ENCODE measurements at regions of chr3 and their contacts with region 1.

Region 1: DNA sequence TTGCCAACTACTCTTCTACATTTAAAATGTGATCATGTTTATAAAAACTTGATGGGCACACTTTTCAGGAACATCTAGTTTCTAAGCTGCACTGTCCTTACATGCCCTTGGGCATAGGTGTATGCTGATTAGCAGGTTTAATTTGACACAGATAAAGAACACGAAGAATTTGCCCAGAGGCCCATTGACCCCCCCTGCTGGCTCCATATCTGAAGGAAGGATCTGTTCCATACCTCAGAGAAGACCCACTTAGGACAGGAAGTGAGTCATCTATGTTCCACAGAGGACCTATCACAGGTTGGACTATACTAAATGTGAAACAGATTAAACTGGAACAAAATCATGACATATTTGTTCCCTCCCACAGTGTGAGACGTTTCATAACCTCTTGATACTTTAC is 92.8 kb upstream of the LPP start:
- DNase-seq: peak in 6 of 9 donors; percentile 4 to 60 (median 11)
- ATAC-seq: peak; percentile 86
- H3K4me3 ChIP-seq: no peak overlapping the region
- H3K4me3 Mint-ChIP-seq: peak overlapping the region in 1 of 10 donors; percentile 62
- H3K27ac ChIP-seq: no peak overlapping the region
- H3K27ac Mint-ChIP-seq: peak overlapping the region in 4 of 9 donors; percentile 19 to 74 (median 31)
- H3K4me1 ChIP-seq: peaks cover 3 to 8% of the 10 kb centered on the region in 2 donors
- H3K4me1 Mint-ChIP-seq: peaks cover 0 to 25% (median 13%) of the 10 kb centered on the region in 7 donors
- H3K27me3 ChIP-seq: no peaks in the 10 kb centered on the region
- H3K27me3 Mint-ChIP-seq: no peaks in the 10 kb centered on the region

Region 2: GRCh38 chr3:188000361-188000861 is 60.7 kb before region 1 on chr3:
- CTCF ChIA-PET with region 1: no interaction called
- POLR2A ChIA-PET with region 1: no interaction called
- intact Hi-C with region 1: loop called in 1 of 2 experiments (anchors 2 kb)
- DNase-seq: no peak
- ATAC-seq: no peak
- H3K4me3 ChIP-seq: peak overlapping the region; percentile 13
- H3K4me3 Mint-ChIP-seq: peak overlapping the region; percentile 42 to 83 (median 77)
- H3K27ac ChIP-seq: no peak overlapping the region
- H3K27ac Mint-ChIP-seq: peak overlapping the region; percentile 27 to 94 (median 85)
- H3K4me1 ChIP-seq: peaks cover 26 to 37% of the 10 kb centered on the region in 2 donors
- H3K4me1 Mint-ChIP-seq: peaks cover 41 to 75% (median 64%) of the 10 kb centered on the region in 7 donors
- H3K27me3 ChIP-seq: no peaks in the 10 kb centered on the region
- H3K27me3 Mint-ChIP-seq: no peaks in the 10 kb centered on the region

Region 3: DNA sequence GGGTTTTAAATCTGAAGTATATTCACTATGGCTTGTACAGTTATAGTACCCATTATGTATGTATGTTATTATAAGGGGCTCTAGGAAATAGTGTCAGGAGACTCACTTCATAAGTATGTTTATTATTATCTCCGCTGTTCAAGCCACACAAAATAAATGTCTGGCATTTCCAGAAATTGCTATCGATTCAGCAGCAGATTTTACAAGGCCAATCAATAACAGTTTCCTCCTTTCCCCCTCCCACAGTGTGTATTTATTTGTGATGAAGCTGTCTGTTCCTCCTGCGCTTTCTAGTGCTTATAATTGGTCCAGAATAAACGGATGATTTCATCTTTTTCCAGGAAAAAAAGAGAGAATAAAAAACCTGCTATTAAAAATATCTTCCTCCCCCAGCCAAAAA is 41.4 kb before region 1 on chr3:
- CTCF ChIA-PET with region 1: no interaction called
- POLR2A ChIA-PET with region 1: no interaction called
- intact Hi-C with region 1: no loop called
- DNase-seq: no peak
- ATAC-seq: no peak
- H3K4me3 ChIP-seq: no peak overlapping the region
- H3K4me3 Mint-ChIP-seq: no peak overlapping the region
- H3K27ac ChIP-seq: no peak overlapping the region
- H3K27ac Mint-ChIP-seq: no peak overlapping the region
- H3K4me1 ChIP-seq: no peaks in the 10 kb centered on the region
- H3K4me1 Mint-ChIP-seq: peaks cover 0 to 4% (median 0%) of the 10 kb centered on the region in 7 donors
- H3K27me3 ChIP-seq: no peaks in the 10 kb centered on the region
- H3K27me3 Mint-ChIP-seq: peaks cover 0 to 7% (median 0%) of the 10 kb centered on the region in 5 donors

Region 4: DNA sequence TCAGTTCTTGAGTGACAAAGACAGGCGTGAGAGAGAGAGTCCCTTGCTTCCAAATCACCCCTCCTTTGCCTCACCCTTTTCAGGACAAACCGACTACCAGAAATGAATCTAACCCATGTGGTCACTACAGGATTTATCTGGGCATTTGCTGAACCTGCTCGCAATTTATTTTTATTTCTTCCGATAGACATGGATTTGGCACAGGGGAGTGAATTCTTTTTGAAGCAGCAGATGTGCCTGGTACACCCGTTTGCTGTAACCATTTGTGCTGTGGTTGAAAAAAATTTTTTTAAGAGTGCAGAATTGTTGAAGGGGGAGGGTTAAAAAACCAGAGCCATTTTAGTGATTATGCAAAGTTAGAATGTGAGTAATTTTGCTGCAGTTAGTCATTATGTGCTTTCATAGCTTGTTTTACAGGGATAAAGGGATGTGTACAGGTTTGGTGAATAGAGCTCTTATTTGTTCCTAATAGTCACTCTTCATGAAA is 534.8 kb after region 1 on chr3:
- CTCF ChIA-PET with region 1: no interaction called
- POLR2A ChIA-PET with region 1: no interaction called
- intact Hi-C with region 1: loop called in 1 of 2 experiments (anchors 5 kb)
- DNase-seq: no peak
- ATAC-seq: no peak
- H3K4me3 ChIP-seq: no peak overlapping the region
- H3K4me3 Mint-ChIP-seq: no peak overlapping the region
- H3K27ac ChIP-seq: no peak overlapping the region
- H3K27ac Mint-ChIP-seq: no peak overlapping the region
- H3K4me1 ChIP-seq: no peaks in the 10 kb centered on the region
- H3K4me1 Mint-ChIP-seq: peaks cover 0 to 2% (median 0%) of the 10 kb centered on the region in 7 donors
- H3K27me3 ChIP-seq: no peaks in the 10 kb centered on the region
- H3K27me3 Mint-ChIP-seq: no peaks in the 10 kb centered on the region

Measured in naive thymus-derived CD4-positive, alpha-beta T cell (primary cell).